PC-9 (cell line): ENCODE measurements at regions of chr9 and their contacts with region 1.

Region 1: DNA sequence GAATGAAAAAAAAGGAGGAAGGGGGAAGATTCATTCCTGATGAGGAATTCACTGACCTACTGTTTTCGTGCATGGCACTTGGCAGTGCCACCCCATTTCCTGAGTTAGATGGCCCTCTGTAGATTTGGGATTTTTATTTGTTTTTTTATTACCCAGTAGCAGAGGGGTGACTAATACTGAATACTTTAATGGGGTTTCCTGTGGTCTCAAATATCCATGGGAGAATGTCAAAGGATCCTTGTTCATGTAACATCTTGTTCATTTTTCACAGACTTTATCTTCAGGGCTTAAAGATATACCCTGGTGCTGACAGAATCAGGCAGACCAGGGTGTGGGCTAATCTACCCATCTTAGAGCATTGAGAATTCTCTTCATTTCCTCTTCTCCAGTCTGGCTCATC is 93.0 kb downstream of the MAMDC2 start:
- DNase-seq: no peak
- H3K4me3 ChIP-seq: no peak overlapping the region
- H3K27ac ChIP-seq: no peak overlapping the region
- H3K4me1 ChIP-seq: no peaks in the 10 kb centered on the region
- H3K27me3 ChIP-seq: no peaks in the 10 kb centered on the region
- CTCF ChIP-seq: no peak

Region 2: GRCh38 chr9:70218767-70219166 is 82.1 kb after region 1 on chr9:
- CTCF ChIA-PET with region 1: no interaction called
- POLR2A ChIA-PET with region 1: no interaction called
- intact Hi-C with region 1: loop called (anchors 10 kb)
- DNase-seq: no peak
- H3K4me3 ChIP-seq: no peak overlapping the region
- H3K27ac ChIP-seq: no peak overlapping the region
- H3K4me1 ChIP-seq: no peaks in the 10 kb centered on the region
- H3K27me3 ChIP-seq: no peaks in the 10 kb centered on the region
- CTCF ChIP-seq: no peak